T-cell (primary cell): ENCODE measurements at regions of chr4 and their contacts with region 1.

Region 1: GRCh38 chr4:75412746-75413145 is 101.5 kb downstream of the RCHY1 start:
- DNase-seq: no peak
- ATAC-seq: no peak
- H3K4me3 ChIP-seq: no peak overlapping the region
- H3K4me3 Mint-ChIP-seq: no peak overlapping the region
- H3K27ac ChIP-seq: no peak overlapping the region
- H3K27ac Mint-ChIP-seq: no peak overlapping the region
- H3K4me1 ChIP-seq: no peaks in the 10 kb centered on the region
- H3K4me1 Mint-ChIP-seq: no peaks in the 10 kb centered on the region
- H3K27me3 ChIP-seq: peaks cover 0 to 7% of the 10 kb centered on the region in 2 experiments
- H3K27me3 Mint-ChIP-seq: peaks cover 0 to 7% of the 10 kb centered on the region in 2 donors

Region 2: GRCh38 chr4:75924309-75924827 is 511.6 kb after region 1 on chr4:
- CTCF ChIA-PET with region 1: interaction called in 1 of 2 experiments, 12 read pairs
- POLR2A ChIA-PET with region 1: no interaction called
- DNase-seq: no peak
- ATAC-seq: no peak
- H3K4me3 ChIP-seq: no peak overlapping the region
- H3K4me3 Mint-ChIP-seq: no peak overlapping the region
- H3K27ac ChIP-seq: no peak overlapping the region
- H3K27ac Mint-ChIP-seq: no peak overlapping the region
- H3K4me1 ChIP-seq: no peaks in the 10 kb centered on the region
- H3K4me1 Mint-ChIP-seq: peaks cover 0 to 7% (median 4%) of the 10 kb centered on the region in 3 donors
- H3K27me3 ChIP-seq: no peaks in the 10 kb centered on the region
- H3K27me3 Mint-ChIP-seq: no peaks in the 10 kb centered on the region